GM12878 (cell line): ENCODE measurements at regions of chr11 and their contacts with region 1.

Region 1: GRCh38 chr11:66592457-66593302 is at the starts of genes CCDC87 and CCS:
- DNase-seq: peak; percentile 84
- ATAC-seq: peak; percentile 98
- H3K4me3 ChIP-seq: peak within 1 kb of the TSS; percentile 85
- H3K27ac ChIP-seq: peak within 1 kb of the TSS; percentile 62
- H3K4me1 ChIP-seq: peaks cover 13% of the 10 kb centered on the region
- H3K27me3 ChIP-seq: no peaks in the 10 kb centered on the region
- CTCF ChIP-seq: peak; percentile 55 to 68 (median 56)
- EP300 ChIP-seq: no peak
- POLR2A ChIP-seq: peak; percentile 100
- RAD21 ChIP-seq: no peak
- polyA plus RNA-seq, gene CCDC87: 0.02 TPM in 1 of 2 experiments, not detected in the other
- polyA plus RNA-seq, gene CCS: 1.5 to 7.6 TPM

Region 2: DNA sequence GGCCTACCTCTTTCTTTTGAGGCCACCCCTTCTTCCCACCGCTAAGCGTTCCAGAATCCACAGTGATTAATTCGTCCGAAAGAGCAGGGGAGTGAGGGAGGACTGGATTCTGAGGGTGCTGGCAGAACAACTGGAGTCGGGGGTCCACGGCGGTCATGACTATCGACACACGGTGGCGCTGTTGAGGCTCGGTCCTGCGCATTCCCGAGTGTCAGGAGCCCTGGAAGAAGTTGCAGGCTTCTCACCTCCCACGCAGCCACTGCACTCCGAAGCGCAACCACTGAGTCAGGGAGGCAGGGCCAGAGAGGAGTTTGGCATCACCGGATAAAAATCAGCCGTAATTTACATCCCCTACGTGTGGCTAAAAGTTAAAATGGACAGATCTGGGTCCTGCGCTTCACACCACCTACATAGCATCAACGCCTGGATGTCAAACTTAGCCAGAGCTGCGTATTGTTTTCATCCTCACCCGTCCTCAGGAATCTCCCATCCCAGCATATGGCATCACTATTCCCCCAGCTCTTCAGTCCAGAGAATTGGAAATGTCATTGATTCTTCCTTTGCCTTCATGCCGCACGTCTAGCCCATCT is 13.6 kb before region 1 on chr11:
- CTCF ChIA-PET with region 1: interaction called, 25 read pairs
- POLR2A ChIA-PET with region 1: interaction called, 4 read pairs
- RAD21 ChIA-PET with region 1: interaction called, 3 read pairs
- SMC1A ChIA-PET with region 1: interaction called, 6 read pairs
- in situ Hi-C with region 1: no loop called
- intact Hi-C with region 1: no loop called
- DNase-seq: no peak
- ATAC-seq: peak; percentile 91
- H3K4me3 ChIP-seq: no peak overlapping the region
- H3K27ac ChIP-seq: no peak overlapping the region
- H3K4me1 ChIP-seq: no peaks in the 10 kb centered on the region; the same call in 1 of the 2 replicates
- H3K27me3 ChIP-seq: no peaks in the 10 kb centered on the region
- CTCF ChIP-seq: peak; percentile 77 to 78 (median 77)
- EP300 ChIP-seq: no peak
- POLR2A ChIP-seq: no peak
- RAD21 ChIP-seq: peak; percentile 69

Region 3: GRCh38 chr11:66607126-66607834 is 14.6 kb after region 1 on chr11:
- CTCF ChIA-PET with region 1: interaction called, 21 read pairs
- POLR2A ChIA-PET with region 1: interaction called, 6 read pairs
- RAD21 ChIA-PET with region 1: interaction called, 4 read pairs
- SMC1A ChIA-PET with region 1: interaction called, 8 read pairs
- in situ Hi-C with region 1: no loop called
- intact Hi-C with region 1: no loop called
- DNase-seq: no peak
- ATAC-seq: no peak
- H3K4me3 ChIP-seq: no peak overlapping the region
- H3K27ac ChIP-seq: no peak overlapping the region
- H3K4me1 ChIP-seq: peaks cover 29% of the 10 kb centered on the region
- H3K27me3 ChIP-seq: no peaks in the 10 kb centered on the region
- CTCF ChIP-seq: no peak
- EP300 ChIP-seq: no peak
- POLR2A ChIP-seq: no peak
- RAD21 ChIP-seq: no peak

Region 4: GRCh38 chr11:66616379-66617154 is 23.9 kb after region 1 on chr11 and contains the start of gene RBM14:
- CTCF ChIA-PET with region 1: interaction called, 10 read pairs
- POLR2A ChIA-PET with region 1: interaction called, 60 read pairs
- RAD21 ChIA-PET with region 1: interaction called, 4 read pairs
- SMC1A ChIA-PET with region 1: interaction called, 19 read pairs
- in situ Hi-C with region 1: no loop called
- intact Hi-C with region 1: loop called (anchors 2 kb)
- DNase-seq: peak; percentile 97
- ATAC-seq: peak; percentile 95
- H3K4me3 ChIP-seq: peak within 1 kb of the TSS; percentile 90
- H3K27ac ChIP-seq: peak within 1 kb of the TSS; percentile 93
- H3K4me1 ChIP-seq: peaks cover 5% of the 10 kb centered on the region; the same call in 1 of the 2 replicates
- H3K27me3 ChIP-seq: no peaks in the 10 kb centered on the region
- CTCF ChIP-seq: no peak
- EP300 ChIP-seq: peak in 1 of 2 experiments; percentile 28; a peak in 1 of 4 replicates
- POLR2A ChIP-seq: peak; percentile 100
- RAD21 ChIP-seq: no peak
- polyA plus RNA-seq, gene RBM14: 5.4 to 16.1 TPM